ENCODE measurements at regions of chr1 and their contacts with region 1.

Region 1: GRCh38 chr1:89022167-89022959 is at the start of gene GBP3:
- DNase-seq: no peak
- ATAC-seq: peak; percentile 65
- H3K4me3 Mint-ChIP-seq: peak within 1 kb of the TSS; percentile 92
- H3K27ac Mint-ChIP-seq: peak within 1 kb of the TSS; percentile 93
- H3K4me1 Mint-ChIP-seq: peaks cover 40% of the 10 kb centered on the region
- H3K27me3 Mint-ChIP-seq: no peaks in the 10 kb centered on the region
- CTCF ChIP-seq: no peak
- total RNA-seq, gene GBP3: 14.4 and 15.5 TPM in 2 replicates

Region 2: DNA sequence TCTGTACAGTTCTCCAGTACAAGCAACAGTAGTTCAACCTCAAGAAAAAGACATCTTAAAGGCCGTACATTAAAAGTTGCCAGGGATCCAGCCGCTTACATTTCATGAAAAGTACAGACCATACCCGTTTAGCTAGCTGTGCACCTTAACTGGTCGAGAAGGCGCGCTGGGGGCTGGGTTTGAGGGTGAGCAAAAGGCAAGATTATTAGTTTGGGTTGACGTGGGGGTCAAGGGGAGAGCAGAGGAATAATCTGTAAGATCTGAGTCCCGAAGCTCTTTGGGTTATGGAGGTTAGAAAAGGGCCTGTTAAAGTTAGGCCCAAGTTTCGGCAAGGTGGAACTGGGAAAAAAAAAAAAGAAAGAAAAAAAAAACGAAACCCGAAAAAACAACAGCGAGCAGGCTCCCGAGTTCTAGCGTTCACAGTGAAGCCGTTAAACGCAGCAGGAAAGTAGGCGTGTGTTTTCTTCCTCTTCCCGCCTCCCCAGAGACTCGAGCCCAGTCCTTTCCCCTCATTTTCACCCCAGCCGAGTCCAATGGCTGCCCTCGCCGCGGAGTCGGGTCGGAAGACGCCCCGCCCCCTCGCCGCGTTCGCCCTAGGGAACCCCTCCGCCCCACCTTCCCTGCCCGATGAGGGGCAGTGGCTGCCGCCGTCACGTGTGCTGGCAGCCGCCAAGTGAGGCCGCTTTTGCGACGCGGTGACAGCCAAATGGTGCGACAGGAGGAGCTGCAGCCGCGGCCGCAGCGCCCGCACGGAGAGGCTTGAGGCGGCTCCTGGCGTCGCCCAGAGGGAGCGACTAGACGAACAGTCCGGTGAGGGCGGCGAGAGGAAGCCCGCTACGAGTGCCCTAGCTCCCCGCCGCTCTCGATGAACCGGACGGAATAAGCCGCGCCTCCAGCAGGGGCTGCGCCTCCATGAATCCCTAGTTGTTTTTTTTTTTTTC is 338.6 kb before region 1 on chr1 and contains the start of gene PKN2:
- CTCF ChIA-PET with region 1: no interaction called
- POLR2A ChIA-PET with region 1: no interaction called
- intact Hi-C with region 1: no loop called
- DNase-seq: peak; percentile 94
- ATAC-seq: peak; percentile 91
- H3K4me3 Mint-ChIP-seq: peak within 1 kb of the TSS; percentile 95
- H3K27ac Mint-ChIP-seq: peak within 1 kb of the TSS; percentile 97
- H3K4me1 Mint-ChIP-seq: peaks cover 28% of the 10 kb centered on the region
- H3K27me3 Mint-ChIP-seq: no peaks in the 10 kb centered on the region
- CTCF ChIP-seq: no peak
- total RNA-seq, gene PKN2: 29.4 and 42.7 TPM in 2 replicates

Region 3: GRCh38 chr1:89005286-89006151 is 16.8 kb before region 1 on chr1:
- CTCF ChIA-PET with region 1: interaction called, 4 read pairs
- POLR2A ChIA-PET with region 1: interaction called, 3 read pairs
- intact Hi-C with region 1: loop called (anchors 2 kb)
- DNase-seq: no peak
- ATAC-seq: no peak
- H3K4me3 Mint-ChIP-seq: no peak overlapping the region
- H3K27ac Mint-ChIP-seq: no peak overlapping the region
- H3K4me1 Mint-ChIP-seq: peaks cover 6% of the 10 kb centered on the region
- H3K27me3 Mint-ChIP-seq: no peaks in the 10 kb centered on the region
- CTCF ChIP-seq: no peak

Region 4: GRCh38 chr1:89065079-89065868 is 42.9 kb after region 1 on chr1 and contains the start of gene GBP1:
- CTCF ChIA-PET with region 1: no interaction called
- POLR2A ChIA-PET with region 1: interaction called, 14 read pairs
- intact Hi-C with region 1: loop called (anchors 1 kb)
- DNase-seq: no peak
- ATAC-seq: peak; percentile 72
- H3K4me3 Mint-ChIP-seq: peak within 1 kb of the TSS; percentile 90
- H3K27ac Mint-ChIP-seq: peak within 1 kb of the TSS; percentile 86
- H3K4me1 Mint-ChIP-seq: peaks cover 47% of the 10 kb centered on the region
- H3K27me3 Mint-ChIP-seq: no peaks in the 10 kb centered on the region
- CTCF ChIP-seq: no peak
- total RNA-seq, gene GBP1: 24.0 and 27.5 TPM in 2 replicates

Region 5: DNA sequence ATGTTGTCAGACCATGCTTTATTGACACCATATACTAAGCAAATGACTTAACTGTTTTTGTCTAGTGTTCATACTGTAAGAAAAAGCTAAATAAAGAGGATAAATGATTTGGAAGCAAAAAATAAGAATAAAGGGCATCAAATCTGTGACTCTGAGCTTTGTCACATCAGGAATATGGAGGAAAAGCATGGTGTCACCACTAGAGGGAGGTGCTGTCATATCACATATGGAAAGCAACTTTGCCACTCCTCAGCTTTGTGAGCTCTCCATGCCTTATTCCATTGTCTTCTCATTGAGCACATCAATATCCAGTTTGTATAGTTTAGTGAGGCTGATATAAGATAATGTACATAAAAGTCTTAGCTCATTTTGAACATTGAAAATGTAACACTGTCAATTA is 63.4 kb after region 1 on chr1:
- CTCF ChIA-PET with region 1: interaction called, 3 read pairs
- POLR2A ChIA-PET with region 1: interaction called, 15 read pairs
- intact Hi-C with region 1: no loop called
- DNase-seq: no peak
- ATAC-seq: peak; percentile 37
- H3K4me3 Mint-ChIP-seq: no peak overlapping the region
- H3K27ac Mint-ChIP-seq: no peak overlapping the region
- H3K4me1 Mint-ChIP-seq: peaks cover 4% of the 10 kb centered on the region
- H3K27me3 Mint-ChIP-seq: no peaks in the 10 kb centered on the region
- CTCF ChIP-seq: no peak

Region 6: GRCh38 chr1:89104147-89104546 is 81.8 kb after region 1 on chr1:
- CTCF ChIA-PET with region 1: no interaction called
- POLR2A ChIA-PET with region 1: no interaction called
- intact Hi-C with region 1: no loop called
- DNase-seq: no peak
- ATAC-seq: no peak
- H3K4me3 Mint-ChIP-seq: no peak overlapping the region
- H3K27ac Mint-ChIP-seq: no peak overlapping the region
- H3K4me1 Mint-ChIP-seq: no peaks in the 10 kb centered on the region
- H3K27me3 Mint-ChIP-seq: peaks cover 2% of the 10 kb centered on the region
- CTCF ChIP-seq: no peak

Region 7: GRCh38 chr1:89125913-89126580 is 103.7 kb after region 1 on chr1 and contains the start of gene GBP2:
- CTCF ChIA-PET with region 1: no interaction called
- POLR2A ChIA-PET with region 1: no interaction called
- intact Hi-C with region 1: loop called (anchors 2 kb)
- DNase-seq: no peak
- ATAC-seq: peak; percentile 79
- H3K4me3 Mint-ChIP-seq: peak within 1 kb of the TSS; percentile 90
- H3K27ac Mint-ChIP-seq: peak within 1 kb of the TSS; percentile 92
- H3K4me1 Mint-ChIP-seq: peaks cover 64% of the 10 kb centered on the region
- H3K27me3 Mint-ChIP-seq: no peaks in the 10 kb centered on the region
- CTCF ChIP-seq: no peak
- total RNA-seq, gene GBP2: 24.4 and 26.7 TPM in 2 replicates

Region 8: GRCh38 chr1:89364954-89365567 is 342.7 kb after region 1 on chr1:
- CTCF ChIA-PET with region 1: no interaction called
- POLR2A ChIA-PET with region 1: no interaction called
- intact Hi-C with region 1: no loop called
- DNase-seq: no peak
- ATAC-seq: no peak
- H3K4me3 Mint-ChIP-seq: no peak overlapping the region
- H3K27ac Mint-ChIP-seq: no peak overlapping the region
- H3K4me1 Mint-ChIP-seq: no peaks in the 10 kb centered on the region
- H3K27me3 Mint-ChIP-seq: no peaks in the 10 kb centered on the region
- CTCF ChIP-seq: no peak

Measured in activated B cell treated with CpG ODN at 0.5 μM for 24 hours (primary cell).